ENCODE measurements at regions of chr9 and their contacts with region 1.

Region 1: GRCh38 chr9:90219548-90220118 is 423.0 kb downstream of the DIRAS2 start:
- DNase-seq: no peak
- H3K4me3 Mint-ChIP-seq: no peak overlapping the region
- H3K27ac Mint-ChIP-seq: no peak overlapping the region
- H3K4me1 Mint-ChIP-seq: no peaks in the 10 kb centered on the region
- H3K27me3 Mint-ChIP-seq: no peaks in the 10 kb centered on the region

Region 2: GRCh38 chr9:89576404-89576839 is 643.2 kb before region 1 on chr9:
- intact Hi-C with region 1: loop called (anchors 10 kb)
- DNase-seq: no peak
- H3K4me3 Mint-ChIP-seq: no peak overlapping the region
- H3K27ac Mint-ChIP-seq: no peak overlapping the region
- H3K4me1 Mint-ChIP-seq: peaks cover 15% of the 10 kb centered on the region
- H3K27me3 Mint-ChIP-seq: peaks cover 58% of the 10 kb centered on the region

Region 3: DNA sequence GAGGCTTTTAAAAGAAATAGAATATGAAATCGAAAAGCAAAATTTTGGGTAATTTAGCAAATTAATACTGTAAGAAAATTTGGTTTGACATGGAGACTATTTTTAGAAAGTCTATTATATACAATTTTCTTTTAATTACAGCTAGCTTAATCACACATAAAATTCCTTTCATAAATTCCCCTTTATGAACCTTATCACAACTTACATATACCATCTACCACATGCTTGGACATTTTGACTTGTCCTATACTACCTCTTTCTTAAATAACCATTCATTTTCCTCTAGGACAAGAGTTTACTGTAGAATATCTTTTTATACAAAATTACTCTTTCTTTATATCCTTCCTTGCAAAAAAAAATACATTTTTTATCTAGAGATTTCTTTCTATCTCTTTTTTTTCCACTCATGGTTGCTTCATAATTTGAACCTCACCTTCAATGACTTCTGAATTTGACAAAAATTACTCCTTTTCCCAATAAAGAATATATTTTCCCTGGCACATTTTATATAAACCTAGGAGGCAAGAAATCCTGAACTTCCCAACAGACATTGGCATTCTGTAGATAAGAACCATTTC is 548.0 kb after region 1 on chr9:
- intact Hi-C with region 1: loop called (anchors 5 kb)
- DNase-seq: no peak
- H3K4me3 Mint-ChIP-seq: no peak overlapping the region
- H3K27ac Mint-ChIP-seq: no peak overlapping the region
- H3K4me1 Mint-ChIP-seq: no peaks in the 10 kb centered on the region
- H3K27me3 Mint-ChIP-seq: peaks cover 4% of the 10 kb centered on the region

Measured in activated T-helper 2 cell treated with anti-CD3 and anti-CD28 coated beads, Interferon-gamma antibody, Interleukin-2, Interleukin-4, amounts not matched to agents 10 μg/mL and 5 μg/mL and 100 μg/mL, durations not matched to agents 14 hours and 24 hours and 36 hours (primary cell).